ENCODE measurements at regions of chr15 and their contacts with region 1.

Region 1: GRCh38 chr15:101445562-101446517 is 43.7 kb downstream of the PCSK6 start:
- DNase-seq: peak; percentile 92
- H3K4me3 ChIP-seq: no peak overlapping the region
- H3K27ac ChIP-seq: peak overlapping the region; percentile 87
- H3K4me1 ChIP-seq: peaks cover 18% of the 10 kb centered on the region
- H3K27me3 ChIP-seq: peaks cover 0 to 5% of the 10 kb centered on the region in 2 experiments
- CTCF ChIP-seq: no peak
- POLR2A ChIP-seq: peak; percentile 47

Region 2: DNA sequence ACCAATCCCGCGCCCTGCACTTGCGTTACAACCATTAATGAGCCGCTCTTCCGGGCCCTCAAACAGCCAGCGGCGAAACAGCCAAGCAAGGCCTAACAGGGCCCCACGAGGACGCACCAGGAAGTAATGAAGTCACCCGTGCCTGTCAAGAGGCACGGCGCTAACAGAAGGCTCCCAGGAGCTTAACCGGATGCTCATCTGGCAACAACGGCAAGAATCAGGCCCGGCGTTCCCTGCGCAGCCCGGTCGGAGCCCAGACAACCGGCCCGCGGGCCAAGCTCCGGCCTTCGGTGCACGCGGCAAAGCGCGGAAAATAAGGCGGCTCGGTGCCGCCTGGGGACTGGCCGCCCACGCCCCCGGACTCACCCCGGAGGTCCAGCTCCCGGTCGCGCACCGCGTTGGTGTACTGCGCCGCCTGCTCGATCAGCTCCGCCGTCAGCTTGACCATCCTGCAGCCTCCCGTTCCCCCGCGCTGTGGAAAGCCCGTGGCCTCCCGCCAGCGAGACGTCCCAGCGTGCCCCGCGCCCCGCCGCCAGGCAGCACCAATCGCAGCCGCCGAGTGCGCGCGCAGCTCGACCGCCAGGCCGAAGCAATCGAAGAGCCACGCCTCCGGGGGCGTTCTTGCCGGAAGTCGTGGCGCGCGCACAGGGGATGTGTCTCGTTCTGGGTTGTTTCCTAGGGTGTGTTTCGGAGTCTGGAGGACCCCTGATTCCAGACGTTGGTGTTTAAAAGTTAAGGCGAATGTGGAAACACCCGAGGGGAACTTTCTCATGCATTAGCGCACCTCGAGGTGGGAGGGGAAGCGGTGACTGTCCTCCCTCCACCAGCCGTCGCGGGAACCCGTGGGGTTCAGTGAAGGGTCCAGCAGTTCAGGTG is 150.9 kb before region 1 on chr15 and contains the start of gene SNRPA1:
- CTCF ChIA-PET with region 1: interaction called, 3 read pairs
- POLR2A ChIA-PET with region 1: no interaction called
- dilution Hi-C with region 1: no loop called
- intact Hi-C with region 1: loop called (anchors 2 kb)
- DNase-seq: peak; percentile 95
- H3K4me3 ChIP-seq: peak within 1 kb of the TSS; percentile 77 to 94 (median 80)
- H3K27ac ChIP-seq: peak within 1 kb of the TSS; percentile 70
- H3K4me1 ChIP-seq: peaks cover 14% of the 10 kb centered on the region
- H3K27me3 ChIP-seq: no peaks in the 10 kb centered on the region
- CTCF ChIP-seq: no peak
- POLR2A ChIP-seq: peak; percentile 53
- total RNA-seq, gene SNRPA1: 80.8 and 82.7 TPM in 2 replicates

Region 3: DNA sequence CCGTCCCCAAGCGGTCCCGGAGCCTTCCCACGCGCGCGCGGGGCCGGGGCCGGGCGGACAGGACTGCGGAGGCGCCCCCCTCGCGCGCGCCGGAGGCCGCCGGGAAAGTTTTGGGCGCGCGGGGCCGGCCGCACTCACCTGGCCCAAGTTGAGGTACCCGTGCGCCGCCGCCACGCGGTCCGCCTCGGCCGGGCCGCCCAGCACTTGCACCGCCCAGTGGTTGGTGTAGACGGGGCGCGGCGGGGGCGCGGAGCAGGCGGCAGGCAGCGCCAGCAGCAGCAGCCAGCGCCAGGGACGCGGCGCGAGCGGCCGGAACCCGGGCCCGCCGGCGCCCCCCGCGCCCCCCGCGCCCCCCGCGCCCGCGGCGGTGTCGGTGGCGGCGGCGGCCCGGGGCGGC is 43.4 kb after region 1 on chr15:
- CTCF ChIA-PET with region 1: no interaction called
- POLR2A ChIA-PET with region 1: no interaction called
- dilution Hi-C with region 1: no loop called
- intact Hi-C with region 1: loop called (anchors 5 kb)
- DNase-seq: no peak
- H3K4me3 ChIP-seq: peak overlapping the region in 1 of 3 experiments; percentile 3
- H3K27ac ChIP-seq: no peak overlapping the region
- H3K4me1 ChIP-seq: no peaks in the 10 kb centered on the region
- H3K27me3 ChIP-seq: peaks cover 28 to 36% of the 10 kb centered on the region in 2 experiments
- CTCF ChIP-seq: no peak
- POLR2A ChIP-seq: no peak

Region 4: GRCh38 chr15:101568309-101568708 is 122.5 kb after region 1 on chr15:
- CTCF ChIA-PET with region 1: no interaction called
- POLR2A ChIA-PET with region 1: no interaction called
- dilution Hi-C with region 1: no loop called
- intact Hi-C with region 1: loop called (anchors 5 kb)
- DNase-seq: peak; percentile 49
- H3K4me3 ChIP-seq: no peak overlapping the region
- H3K27ac ChIP-seq: no peak overlapping the region
- H3K4me1 ChIP-seq: peaks cover 20% of the 10 kb centered on the region
- H3K27me3 ChIP-seq: no peaks in the 10 kb centered on the region
- CTCF ChIP-seq: no peak
- POLR2A ChIP-seq: no peak

Measured in endothelial cell of umbilical vein (primary cell).